ENCODE measurements at regions of chr1 and their contacts with region 1.

Region 1: DNA sequence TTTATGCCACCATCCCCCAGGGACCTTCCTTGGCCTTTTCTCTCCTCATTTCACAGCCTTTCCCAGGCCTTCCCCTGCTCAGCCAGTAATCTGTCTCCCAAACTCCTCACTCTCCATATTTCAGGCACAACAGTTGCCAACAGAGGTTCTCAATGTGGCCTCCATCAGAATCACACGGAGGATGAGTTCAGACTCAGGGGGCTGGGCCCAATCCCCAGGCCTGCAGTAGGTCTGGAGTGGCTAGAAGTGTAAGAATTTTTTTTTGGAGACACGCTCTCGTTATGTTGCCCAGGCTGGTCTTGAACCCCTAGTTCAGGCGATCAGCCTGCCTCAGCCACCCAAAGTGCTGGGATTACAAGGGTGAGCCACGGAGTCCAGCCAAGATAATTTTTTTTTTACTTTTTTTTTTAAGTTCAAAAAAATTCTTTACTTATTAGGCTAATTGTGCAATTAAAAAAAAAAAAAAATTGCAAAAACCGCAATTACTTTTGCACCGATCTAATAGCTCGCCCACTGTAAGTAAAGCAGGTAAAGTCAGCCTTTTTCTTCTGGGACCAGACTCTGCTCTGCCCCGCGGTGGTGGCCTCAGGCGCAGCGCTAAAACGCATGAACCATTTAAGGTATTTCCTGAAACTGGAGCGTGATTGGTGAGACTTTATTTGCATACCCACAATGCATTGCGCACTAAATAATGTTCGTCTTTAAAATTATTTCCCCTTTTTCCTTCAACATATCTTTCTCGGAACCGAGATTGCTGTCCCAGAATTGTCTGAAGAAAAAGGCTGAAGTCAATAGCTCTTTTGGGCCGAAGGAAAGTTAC is 18.7 kb downstream of the KIAA2013 start:
- DNase-seq: peak; percentile 94 to 96 (median 95)
- H3K4me3 ChIP-seq: peak overlapping the region in 1 of 2 donors; percentile 83
- H3K4me3 Mint-ChIP-seq: peak overlapping the region; percentile 92 to 100 (median 96)
- H3K27ac ChIP-seq: peak overlapping the region; percentile 97
- H3K27ac Mint-ChIP-seq: peak overlapping the region; percentile 99 to 100 (median 100)
- H3K4me1 ChIP-seq: peaks cover 28% of the 10 kb centered on the region
- H3K4me1 Mint-ChIP-seq: peaks cover 16 to 41% (median 25%) of the 10 kb centered on the region in 4 donors
- H3K27me3 ChIP-seq: peaks cover 5% of the 10 kb centered on the region
- H3K27me3 Mint-ChIP-seq: peaks cover 1 to 9% of the 10 kb centered on the region in 2 donors

Region 2: DNA sequence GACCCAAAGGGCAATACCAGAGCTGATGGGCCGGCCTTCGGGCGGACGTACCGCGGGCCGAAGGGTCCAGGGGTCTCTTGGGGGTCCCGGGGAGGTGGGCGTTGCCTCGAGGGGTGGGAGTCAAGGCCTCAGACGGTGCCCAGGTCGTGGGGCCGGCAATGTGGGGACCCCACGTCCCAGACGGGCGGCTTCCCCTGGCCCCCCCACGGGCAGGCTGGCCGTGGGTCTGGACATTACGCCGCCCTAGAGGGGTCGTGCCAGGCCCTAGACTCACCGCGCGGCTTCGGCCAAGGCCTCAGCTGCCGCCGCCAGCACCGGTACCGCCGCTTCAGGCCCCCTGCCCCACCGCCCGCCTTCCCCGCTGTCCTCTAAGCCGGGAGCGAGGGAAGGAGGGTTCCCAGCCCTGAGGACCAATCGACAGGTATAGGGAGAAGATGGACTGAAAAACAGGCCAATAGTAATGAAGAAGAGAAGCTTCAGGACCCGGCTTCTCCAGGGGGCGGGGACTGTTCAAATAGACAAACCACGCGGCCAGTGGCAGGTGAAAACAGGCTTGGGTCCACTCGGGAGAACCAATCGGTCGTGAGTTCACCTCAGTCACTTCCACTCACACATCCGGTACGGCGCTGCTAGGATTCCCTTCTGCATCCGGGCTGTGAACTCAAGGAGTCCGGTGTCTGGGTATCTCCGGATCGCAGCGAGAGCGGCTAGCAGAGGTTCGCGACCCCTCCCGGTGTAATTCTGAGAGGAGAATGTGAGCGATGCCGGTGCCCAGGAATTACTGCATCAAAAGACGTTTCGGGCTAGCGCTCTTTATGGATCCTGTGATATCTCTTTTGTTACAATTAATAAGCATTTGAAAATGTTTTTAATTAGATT is 645.1 kb before region 1 on chr1 and contains the start of gene MTOR:
- CTCF ChIA-PET with region 1: no interaction called
- POLR2A ChIA-PET with region 1: interaction called, 18 read pairs
- intact Hi-C with region 1: no loop called
- DNase-seq: peak; percentile 97 to 99 (median 99)
- H3K4me3 ChIP-seq: peak within 1 kb of the TSS; percentile 44 to 80
- H3K4me3 Mint-ChIP-seq: peak within 1 kb of the TSS; percentile 81 to 97 (median 91)
- H3K27ac ChIP-seq: peak within 1 kb of the TSS; percentile 91
- H3K27ac Mint-ChIP-seq: peak within 1 kb of the TSS; percentile 74 to 97 (median 93)
- H3K4me1 ChIP-seq: peaks cover 15% of the 10 kb centered on the region
- H3K4me1 Mint-ChIP-seq: peaks cover 13 to 30% (median 21%) of the 10 kb centered on the region in 4 donors
- H3K27me3 ChIP-seq: no peaks in the 10 kb centered on the region
- H3K27me3 Mint-ChIP-seq: no peaks in the 10 kb centered on the region
- total RNA-seq, gene MTOR: 41.4 to 46.8 TPM

Region 3: DNA sequence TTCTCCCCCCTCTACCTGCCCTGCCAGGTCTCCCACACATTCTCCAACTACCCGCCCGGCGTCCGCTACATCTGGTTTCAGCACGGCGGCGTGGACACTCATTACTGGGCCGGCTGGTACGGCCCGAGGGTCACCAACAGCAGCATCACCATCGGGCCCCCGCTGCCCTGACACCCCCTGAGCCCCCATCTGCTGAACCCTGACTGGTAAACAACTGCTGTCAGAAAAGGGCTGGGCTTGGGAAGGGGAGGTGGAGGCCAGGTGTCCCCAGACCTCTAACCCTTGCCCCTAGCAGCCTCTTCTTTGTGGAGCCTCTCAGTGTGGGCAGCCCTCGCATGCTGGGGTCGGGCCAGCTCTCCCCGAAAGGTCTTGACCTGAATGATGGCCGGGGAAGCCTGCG is 246.4 kb before region 1 on chr1:
- CTCF ChIA-PET with region 1: no interaction called
- POLR2A ChIA-PET with region 1: interaction called, 17 read pairs
- intact Hi-C with region 1: no loop called
- DNase-seq: no peak
- H3K4me3 ChIP-seq: no peak overlapping the region
- H3K4me3 Mint-ChIP-seq: no peak overlapping the region
- H3K27ac ChIP-seq: no peak overlapping the region
- H3K27ac Mint-ChIP-seq: no peak overlapping the region
- H3K4me1 ChIP-seq: peaks cover 8% of the 10 kb centered on the region
- H3K4me1 Mint-ChIP-seq: peaks cover 0 to under 1% (median 0%) of the 10 kb centered on the region in 4 donors
- H3K27me3 ChIP-seq: no peaks in the 10 kb centered on the region
- H3K27me3 Mint-ChIP-seq: no peaks in the 10 kb centered on the region

Region 4: GRCh38 chr1:11735854-11736745 is 171.4 kb before region 1 on chr1 and contains the start of gene AGTRAP:
- CTCF ChIA-PET with region 1: no interaction called
- POLR2A ChIA-PET with region 1: interaction called, 14 read pairs
- intact Hi-C with region 1: no loop called
- DNase-seq: peak; percentile 77 to 89 (median 79)
- H3K4me3 ChIP-seq: peak within 1 kb of the TSS; percentile 84 to 93
- H3K4me3 Mint-ChIP-seq: peak within 1 kb of the TSS; percentile 89 to 97 (median 92)
- H3K27ac ChIP-seq: peak within 1 kb of the TSS; percentile 81
- H3K27ac Mint-ChIP-seq: peak within 1 kb of the TSS; percentile 44 to 93 (median 87)
- H3K4me1 ChIP-seq: peaks cover 60% of the 10 kb centered on the region
- H3K4me1 Mint-ChIP-seq: peaks cover 39 to 81% (median 56%) of the 10 kb centered on the region in 4 donors
- H3K27me3 ChIP-seq: no peaks in the 10 kb centered on the region
- H3K27me3 Mint-ChIP-seq: no peaks in the 10 kb centered on the region
- total RNA-seq, gene AGTRAP: 19.0 to 21.7 TPM

Region 5: DNA sequence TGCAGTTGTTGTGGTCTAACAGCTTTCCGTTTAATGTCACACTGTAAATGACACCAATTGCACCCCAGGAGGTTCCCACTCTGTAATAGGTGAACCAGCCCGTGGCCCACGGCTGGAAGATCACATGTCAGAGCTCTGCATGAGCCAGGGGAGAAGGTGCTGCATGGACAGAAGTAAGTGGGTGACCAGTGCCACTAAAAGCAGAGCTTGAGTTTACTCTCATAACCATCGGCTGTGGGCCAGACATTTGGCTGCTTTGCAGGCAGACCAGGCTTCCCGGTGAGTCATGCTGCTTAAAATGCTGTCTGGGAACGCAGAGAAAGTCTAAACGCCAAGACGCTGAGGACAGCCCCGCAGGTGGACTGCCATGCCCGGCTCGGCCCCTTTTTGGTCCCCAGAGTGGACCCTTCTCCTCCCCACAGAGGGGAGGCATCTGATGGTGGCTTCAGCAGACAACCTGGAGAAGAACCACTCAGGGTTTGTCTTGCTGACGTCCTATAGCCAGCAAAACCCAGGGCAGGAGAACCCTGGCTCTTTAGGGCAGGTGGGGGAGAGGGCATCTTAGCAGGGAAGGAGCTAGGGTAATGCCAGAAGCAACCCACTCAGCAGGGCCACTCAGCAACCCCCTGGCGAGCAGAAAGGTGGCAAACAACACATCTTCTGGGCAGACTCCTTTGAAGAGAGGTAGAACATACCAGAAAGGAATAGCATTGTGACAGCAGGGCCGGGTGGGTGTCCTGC is 11.5 kb after region 1 on chr1:
- CTCF ChIA-PET with region 1: no interaction called
- POLR2A ChIA-PET with region 1: interaction called, 41 read pairs
- intact Hi-C with region 1: no loop called
- DNase-seq: no peak
- H3K4me3 ChIP-seq: no peak overlapping the region
- H3K4me3 Mint-ChIP-seq: no peak overlapping the region
- H3K27ac ChIP-seq: no peak overlapping the region
- H3K27ac Mint-ChIP-seq: no peak overlapping the region
- H3K4me1 ChIP-seq: peaks cover 25% of the 10 kb centered on the region
- H3K4me1 Mint-ChIP-seq: peaks cover 16 to 40% (median 24%) of the 10 kb centered on the region in 4 donors
- H3K27me3 ChIP-seq: no peaks in the 10 kb centered on the region
- H3K27me3 Mint-ChIP-seq: no peaks in the 10 kb centered on the region

Region 6: DNA sequence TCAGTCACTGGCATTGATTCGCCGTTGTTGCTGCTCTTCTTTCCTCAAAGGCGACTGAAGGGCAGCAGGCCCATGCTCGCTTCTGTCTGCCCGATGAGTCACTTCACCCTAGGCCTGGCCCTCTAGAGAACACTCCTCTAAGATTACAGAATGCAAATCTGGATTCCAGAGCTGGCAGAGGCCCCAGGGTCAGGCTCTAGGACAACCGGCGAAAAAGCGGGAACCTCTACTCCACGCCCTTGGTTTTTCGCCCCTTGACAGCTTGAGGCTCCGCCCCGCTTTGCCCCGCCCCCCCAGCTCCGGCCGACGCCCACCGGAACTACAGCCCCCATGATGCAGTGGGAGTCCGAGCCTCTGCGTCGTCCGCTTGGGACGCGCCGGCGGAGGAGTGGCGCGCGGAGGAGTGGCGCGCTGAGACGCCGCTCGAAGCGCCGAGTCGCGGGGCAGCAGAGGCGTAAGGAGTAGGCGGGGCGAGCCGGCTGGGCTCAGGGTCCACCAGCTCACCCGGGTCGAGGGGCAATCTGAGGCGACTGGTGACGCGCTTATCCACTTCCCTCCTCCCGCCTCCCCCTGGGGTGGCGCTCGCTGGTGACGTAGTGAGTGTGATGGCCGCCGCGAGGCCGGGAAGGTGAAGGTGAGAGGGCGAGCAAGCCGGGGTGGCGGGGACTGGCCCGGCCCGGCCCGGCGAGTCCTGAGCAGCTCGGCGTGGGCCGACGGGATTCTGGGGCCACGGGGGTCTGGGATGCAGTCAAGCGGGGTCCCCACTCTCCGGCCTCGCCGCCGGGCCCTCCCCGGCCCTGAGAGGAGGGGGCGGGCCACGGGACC is 72.6 kb after region 1 on chr1 and contains the start of gene MFN2:
- CTCF ChIA-PET with region 1: interaction called, 3 read pairs
- POLR2A ChIA-PET with region 1: interaction called, 126 read pairs
- intact Hi-C with region 1: loop called (anchors 1 kb)
- DNase-seq: peak; percentile 93 to 95 (median 93)
- H3K4me3 ChIP-seq: peak within 1 kb of the TSS; percentile 69 to 82
- H3K4me3 Mint-ChIP-seq: peak within 1 kb of the TSS; percentile 90 to 98 (median 93)
- H3K27ac ChIP-seq: peak within 1 kb of the TSS; percentile 93
- H3K27ac Mint-ChIP-seq: peak within 1 kb of the TSS; percentile 93 to 97 (median 96)
- H3K4me1 ChIP-seq: peaks cover 39% of the 10 kb centered on the region
- H3K4me1 Mint-ChIP-seq: peaks cover 30 to 53% (median 40%) of the 10 kb centered on the region in 4 donors
- H3K27me3 ChIP-seq: no peaks in the 10 kb centered on the region
- H3K27me3 Mint-ChIP-seq: no peaks in the 10 kb centered on the region
- total RNA-seq, gene MFN2: 44.0 to 53.7 TPM

Region 7: GRCh38 chr1:12177999-12178441 is 270.5 kb after region 1 on chr1:
- CTCF ChIA-PET with region 1: no interaction called
- POLR2A ChIA-PET with region 1: interaction called, 10 read pairs
- intact Hi-C with region 1: no loop called
- DNase-seq: peak; percentile 86 to 99 (median 90)
- H3K4me3 ChIP-seq: peak overlapping the region; percentile 8 to 32
- H3K4me3 Mint-ChIP-seq: peak overlapping the region; percentile 80 to 94 (median 88)
- H3K27ac ChIP-seq: peak overlapping the region; percentile 97
- H3K27ac Mint-ChIP-seq: peak overlapping the region; percentile 98 to 100 (median 99)
- H3K4me1 ChIP-seq: peaks cover 100% of the 10 kb centered on the region
- H3K4me1 Mint-ChIP-seq: peaks cover 45 to 98% (median 83%) of the 10 kb centered on the region in 4 donors
- H3K27me3 ChIP-seq: no peaks in the 10 kb centered on the region
- H3K27me3 Mint-ChIP-seq: peaks cover 0 to 3% of the 10 kb centered on the region in 2 donors